Right ventricle myocardium inferior (tissue), 1 donor: ENCODE measurements at regions of chr17 and their contacts with region 1.

Region 1: DNA sequence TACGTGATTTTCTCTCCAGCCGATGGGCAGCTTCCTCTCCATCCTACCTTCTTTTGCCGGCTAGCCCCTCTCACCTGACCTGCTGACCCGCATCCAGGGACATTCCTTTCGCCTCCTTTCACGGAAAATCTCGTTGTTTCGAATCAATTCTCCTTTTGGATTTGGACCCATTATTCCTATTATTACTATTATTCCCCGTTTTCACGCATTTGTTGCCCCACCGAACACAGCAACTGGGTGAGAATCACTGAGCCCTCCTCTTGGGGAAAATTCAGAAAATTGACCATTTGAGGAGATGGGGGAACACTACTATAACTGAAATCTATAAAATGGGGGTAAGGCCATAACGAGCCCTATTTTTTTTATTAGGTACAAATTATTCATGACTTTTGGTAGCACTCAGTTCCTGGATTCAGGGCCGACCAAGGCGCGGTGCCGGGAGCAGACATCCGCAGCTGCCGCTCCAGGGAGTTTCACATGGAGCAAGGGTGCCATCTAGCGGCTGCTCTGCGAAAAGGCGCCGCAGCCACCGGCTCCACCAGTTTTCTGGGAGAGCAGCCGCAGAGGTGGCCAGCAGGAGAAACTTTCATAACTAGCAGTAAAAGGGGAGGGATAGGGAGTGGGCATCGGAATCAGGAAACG is 3.3 kb upstream of the HOXB8 start:
- DNase-seq: peak; percentile 92
- ATAC-seq: peak; percentile 79

Region 2: DNA sequence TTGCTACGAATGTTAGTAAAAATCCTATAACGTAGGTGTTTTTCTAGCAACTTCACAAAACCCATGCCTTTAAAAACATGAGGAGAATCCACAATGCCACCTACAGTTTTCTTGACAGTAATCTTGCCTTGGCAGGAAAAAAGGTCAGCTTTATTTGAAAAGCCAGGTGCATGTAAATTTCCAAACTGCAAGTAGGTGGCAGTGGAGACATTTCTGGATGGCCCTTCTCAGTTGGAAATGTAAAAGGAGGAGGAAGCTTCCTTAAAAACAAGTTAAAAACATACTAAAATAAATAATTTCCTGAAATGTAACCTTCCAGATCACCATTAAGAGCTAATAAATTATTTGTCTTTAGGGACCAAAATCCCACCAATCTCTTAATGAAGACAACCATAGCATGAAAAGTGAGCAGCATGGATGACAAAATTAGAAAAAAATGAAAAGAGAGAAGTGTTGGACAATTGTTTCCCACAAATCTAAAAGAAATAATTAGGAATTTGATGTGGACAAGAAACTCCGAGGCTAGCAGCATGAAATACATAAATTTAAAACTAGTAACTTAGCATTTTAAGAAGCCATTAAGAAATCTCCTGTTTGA is 358.6 kb before region 1 on chr17:
- intact Hi-C with region 1: loop called (anchors 5 kb)
- DNase-seq: no peak
- ATAC-seq: no peak

Region 3: DNA sequence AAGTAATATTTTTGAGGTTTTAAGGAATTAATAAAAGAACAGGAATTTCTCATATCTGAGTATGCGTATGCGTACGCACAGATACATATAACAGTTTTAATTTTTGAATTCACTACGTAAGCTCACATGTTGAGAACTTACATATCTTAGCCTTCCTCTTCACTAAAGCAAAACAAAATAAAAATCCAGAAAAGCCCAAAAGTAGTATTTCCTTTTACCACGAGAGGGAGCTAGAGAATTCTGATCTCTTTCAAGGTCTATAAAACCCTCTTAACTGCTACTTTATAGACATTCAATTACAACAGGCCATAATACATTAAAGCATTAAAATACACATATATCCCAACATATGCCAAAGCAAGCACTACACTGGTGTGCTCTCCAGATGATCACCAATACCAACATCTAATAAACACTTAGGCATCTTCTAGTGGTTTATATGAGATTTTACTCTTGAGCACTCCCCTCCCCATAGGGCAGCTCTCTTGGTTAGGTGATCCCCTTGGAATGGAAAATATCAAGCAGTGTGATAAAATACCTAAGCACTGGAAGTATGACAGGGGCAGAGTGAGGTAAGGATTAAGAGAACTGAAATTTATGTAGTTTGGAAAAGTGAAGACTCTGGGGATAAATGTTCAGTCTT is 282.4 kb before region 1 on chr17:
- intact Hi-C with region 1: loop called (anchors 1 kb)
- DNase-seq: no peak
- ATAC-seq: no peak

Region 4: DNA sequence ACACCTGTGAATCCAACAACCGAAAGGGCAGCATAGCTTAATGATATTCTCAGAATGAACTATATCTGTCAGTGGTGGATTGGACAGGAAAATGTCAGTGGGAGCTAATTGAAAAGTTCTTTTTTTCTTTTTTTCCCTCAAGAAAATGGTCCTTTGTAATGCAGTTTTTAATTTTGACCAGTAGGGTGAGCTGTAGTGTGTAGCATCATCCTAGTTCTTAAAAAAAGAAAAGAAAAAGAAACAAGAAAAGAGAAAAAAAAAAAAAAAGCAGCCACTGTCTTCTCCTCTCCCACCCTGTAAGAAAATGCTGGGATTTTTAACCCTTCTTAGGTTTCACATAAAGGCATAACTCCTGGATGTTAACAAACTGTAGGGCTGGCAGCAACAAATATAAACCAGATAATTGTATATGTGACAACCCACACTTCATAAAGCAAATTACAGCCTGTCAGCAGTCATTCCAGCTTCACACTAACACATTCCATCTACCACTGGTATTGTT is 266.5 kb before region 1 on chr17:
- intact Hi-C with region 1: loop called (anchors 5 kb)
- DNase-seq: no peak
- ATAC-seq: no peak

Region 5: GRCh38 chr17:48543107-48543853 is 75.1 kb before region 1 on chr17:
- intact Hi-C with region 1: no loop called
- DNase-seq: no peak
- ATAC-seq: peak; percentile 22

Region 6: DNA sequence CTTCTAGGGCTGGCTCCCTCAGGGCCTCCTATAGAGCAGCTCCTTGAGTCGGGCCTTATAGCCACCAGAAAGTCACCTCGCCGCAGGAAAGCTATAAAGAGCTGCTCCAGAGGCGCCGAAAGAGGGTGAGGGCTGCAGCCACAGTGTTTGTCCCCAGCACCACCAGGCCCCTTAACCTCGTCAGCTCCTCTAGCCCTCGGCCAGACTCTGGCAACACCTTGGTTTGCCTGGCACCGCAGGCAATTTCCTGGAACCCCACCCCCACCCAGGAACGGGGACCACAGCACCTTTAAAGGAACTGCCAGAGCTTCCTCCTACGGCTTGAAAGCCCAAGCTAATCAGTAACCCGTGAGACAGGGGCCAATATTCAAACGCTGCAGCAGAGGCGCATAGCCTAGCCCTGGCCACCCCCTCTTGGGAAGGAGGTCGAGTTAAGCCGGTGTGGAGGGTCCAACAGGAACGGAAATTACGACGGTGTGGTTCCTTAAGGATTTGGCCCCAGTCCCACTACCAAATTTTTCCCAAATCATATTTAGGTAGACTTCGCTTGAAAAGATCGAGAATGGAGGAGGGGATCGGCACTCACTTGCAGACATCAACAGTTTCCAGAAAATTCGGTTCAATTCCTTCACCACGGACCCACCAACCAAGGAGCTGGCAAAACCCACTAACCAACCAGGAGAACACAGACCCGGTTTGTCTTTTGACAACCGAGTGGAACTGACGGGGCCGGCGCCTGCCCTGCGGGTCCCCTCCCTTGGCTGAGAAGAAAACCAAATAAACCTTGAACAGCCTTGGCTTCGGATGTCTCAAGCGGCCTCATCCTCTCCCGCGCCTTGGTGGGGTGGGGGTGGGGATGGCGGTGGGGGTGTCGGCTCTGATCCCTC is 16.6 kb before region 1 on chr17:
- intact Hi-C with region 1: loop called (anchors 2 kb)
- DNase-seq: no peak
- ATAC-seq: no peak

Region 7: DNA sequence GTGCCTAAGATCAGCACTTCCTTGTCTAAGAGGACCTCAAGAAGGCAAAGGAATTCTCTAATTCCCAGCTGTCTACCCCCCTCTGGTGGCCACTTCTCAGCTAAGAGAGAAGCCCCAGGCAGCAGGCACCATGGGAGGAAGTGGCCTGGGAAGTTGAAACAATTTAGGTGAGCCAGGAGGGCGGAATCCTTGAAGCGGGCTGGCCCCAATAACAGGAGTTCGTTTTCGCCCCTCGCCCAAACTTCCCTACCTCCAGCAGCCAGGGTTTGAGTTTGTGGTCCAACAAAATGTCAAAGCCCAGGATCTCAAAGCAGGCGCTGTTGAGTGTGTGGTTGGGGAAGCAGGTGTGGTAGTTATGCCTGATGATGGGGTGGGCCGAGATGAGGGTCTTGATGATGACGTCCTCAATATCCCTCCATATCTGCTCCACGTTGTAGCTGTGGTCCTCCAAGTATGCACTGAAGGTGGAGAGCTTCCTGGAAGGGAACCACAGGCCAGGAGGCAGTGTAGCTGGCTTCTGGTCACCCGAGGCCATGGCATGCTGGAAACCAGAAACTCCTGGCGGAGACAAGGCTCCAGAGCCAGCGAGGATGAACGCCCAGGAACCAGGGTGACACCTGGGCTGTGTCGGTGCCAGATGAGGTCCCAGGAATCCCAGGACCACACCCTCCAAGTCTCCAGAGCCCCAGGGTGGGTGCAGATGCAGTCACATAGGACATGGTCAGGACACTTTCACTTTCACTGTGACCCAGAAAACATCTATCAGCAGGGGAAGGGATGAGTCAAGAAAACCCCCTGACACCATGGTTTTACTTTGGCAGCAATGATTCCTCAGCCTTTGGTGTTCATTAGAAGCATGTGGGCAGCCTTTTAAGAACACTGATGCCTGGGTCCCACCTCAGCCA is 173.0 kb after region 1 on chr17:
- intact Hi-C with region 1: no loop called
- DNase-seq: no peak
- ATAC-seq: peak; percentile 69